Endothelial cell of umbilical vein (primary cell): ENCODE measurements at regions of chr1 and their contacts with region 1.

Region 1: DNA sequence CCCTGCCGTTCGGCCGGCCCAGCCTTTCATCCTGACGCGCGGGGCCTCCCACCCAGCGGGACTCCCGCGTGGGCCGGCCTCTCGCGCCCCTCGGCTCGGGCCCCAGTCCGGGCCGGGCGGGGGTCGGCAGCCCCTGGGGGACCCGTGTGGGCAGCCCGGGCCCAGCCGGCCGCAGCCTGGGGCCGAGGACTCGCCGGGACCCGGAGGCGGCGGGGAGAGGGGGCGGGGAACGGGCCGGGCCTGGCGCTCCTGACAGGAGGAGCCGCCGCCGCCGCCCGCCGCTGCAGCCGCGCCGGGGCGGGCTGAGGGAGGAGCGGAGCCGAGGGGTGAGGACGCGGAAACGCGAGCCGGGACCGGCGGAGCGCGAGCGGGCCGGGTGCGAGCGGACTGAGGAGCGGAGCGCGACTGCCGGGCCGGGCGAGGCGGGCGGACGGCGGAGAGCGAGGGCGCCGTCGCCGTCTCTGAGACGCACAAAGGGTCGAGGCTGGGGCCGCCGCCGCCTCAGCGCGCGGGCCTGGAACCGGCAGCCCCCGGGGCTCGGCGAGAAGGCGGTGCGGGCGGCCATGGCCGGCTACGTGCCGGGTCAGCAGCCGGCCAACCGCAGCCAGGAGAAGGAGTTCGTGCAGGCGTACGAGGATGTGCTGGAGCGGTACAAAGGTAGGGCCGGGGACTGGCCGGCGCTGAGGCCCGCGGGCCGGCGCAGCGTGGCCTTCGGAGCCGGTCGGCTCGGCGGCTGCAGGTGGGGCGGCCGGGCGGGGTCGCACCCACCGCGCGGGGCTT is 79.1 kb downstream of the NDUFS5 start:
- DNase-seq: peak; percentile 60
- H3K4me3 ChIP-seq: peak overlapping the region; percentile 70 to 79 (median 77)
- H3K27ac ChIP-seq: peak overlapping the region; percentile 82
- H3K4me1 ChIP-seq: peaks cover 53% of the 10 kb centered on the region
- H3K27me3 ChIP-seq: no peaks in the 10 kb centered on the region
- CTCF ChIP-seq: no peak
- POLR2A ChIP-seq: no peak

Region 2: DNA sequence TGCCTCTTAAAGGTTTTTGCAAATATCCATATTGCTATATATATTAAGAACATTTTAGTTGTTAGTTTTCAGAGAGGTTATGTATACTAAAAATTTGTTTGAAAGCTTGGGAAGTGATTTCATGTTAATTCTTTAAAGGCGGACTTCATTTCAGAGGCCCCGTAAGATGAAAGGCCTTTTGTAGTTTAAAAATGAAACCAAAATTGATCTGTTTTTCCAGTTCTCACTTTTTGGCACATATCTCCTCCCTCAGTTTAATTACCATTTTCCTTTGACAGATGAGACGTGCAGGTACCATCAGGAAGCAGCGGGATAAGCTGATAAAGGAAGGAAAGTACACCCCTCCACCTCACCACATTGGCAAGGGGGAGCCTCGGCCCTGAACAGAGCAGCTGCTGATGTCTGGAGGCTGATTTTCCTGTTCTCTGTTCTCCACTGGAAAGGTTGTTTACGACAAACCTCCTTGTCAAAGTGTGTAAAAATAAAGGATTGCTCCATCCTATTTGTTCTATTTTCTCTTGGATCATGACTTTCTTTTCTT is 71.1 kb before region 1 on chr1:
- CTCF ChIA-PET with region 1: no interaction called
- POLR2A ChIA-PET with region 1: no interaction called
- dilution Hi-C with region 1: no loop called
- intact Hi-C with region 1: no loop called
- DNase-seq: no peak
- H3K4me3 ChIP-seq: no peak overlapping the region
- H3K27ac ChIP-seq: no peak overlapping the region
- H3K4me1 ChIP-seq: no peaks in the 10 kb centered on the region
- H3K27me3 ChIP-seq: no peaks in the 10 kb centered on the region
- CTCF ChIP-seq: no peak
- POLR2A ChIP-seq: no peak

Region 3: DNA sequence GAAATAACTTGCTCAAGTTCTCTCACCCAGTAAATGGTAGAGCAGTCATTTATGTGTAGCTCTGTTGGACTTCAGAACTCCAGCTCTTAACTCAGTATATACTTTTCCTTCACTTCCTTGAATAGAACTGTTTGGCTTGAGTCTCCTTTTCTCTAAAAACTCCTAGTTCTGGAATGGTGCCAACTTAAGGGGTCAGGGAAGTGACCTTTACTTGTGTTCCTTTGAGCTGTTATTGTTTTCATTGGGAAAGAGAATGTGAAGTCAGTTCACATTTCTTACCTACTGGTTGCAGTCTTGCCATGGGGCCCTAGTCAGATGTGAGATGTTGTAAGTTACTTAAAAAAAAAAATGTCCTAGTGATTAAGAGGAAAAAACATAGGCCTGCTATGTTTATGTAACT is 22.3 kb after region 1 on chr1:
- CTCF ChIA-PET with region 1: interaction called, 82 read pairs
- POLR2A ChIA-PET with region 1: interaction called, 6 read pairs
- dilution Hi-C with region 1: no loop called
- intact Hi-C with region 1: loop called (anchors 1 kb)
- DNase-seq: peak; percentile 99
- H3K4me3 ChIP-seq: peak overlapping the region in 1 of 3 experiments; percentile 13
- H3K27ac ChIP-seq: peak overlapping the region; percentile 76
- H3K4me1 ChIP-seq: peaks cover 73% of the 10 kb centered on the region
- H3K27me3 ChIP-seq: no peaks in the 10 kb centered on the region
- CTCF ChIP-seq: no peak
- POLR2A ChIP-seq: peak; percentile 23

Region 4: GRCh38 chr1:39158327-39159086 is 53.3 kb after region 1 on chr1:
- CTCF ChIA-PET with region 1: no interaction called
- POLR2A ChIA-PET with region 1: no interaction called
- dilution Hi-C with region 1: no loop called
- intact Hi-C with region 1: loop called (anchors 2 kb)
- DNase-seq: no peak
- H3K4me3 ChIP-seq: no peak overlapping the region
- H3K27ac ChIP-seq: peak overlapping the region; percentile 80
- H3K4me1 ChIP-seq: peaks cover 64% of the 10 kb centered on the region
- H3K27me3 ChIP-seq: no peaks in the 10 kb centered on the region
- CTCF ChIP-seq: no peak
- POLR2A ChIP-seq: no peak

Region 5: GRCh38 chr1:39258146-39258924 is 153.1 kb after region 1 on chr1:
- CTCF ChIA-PET with region 1: interaction called, 12 read pairs
- POLR2A ChIA-PET with region 1: no interaction called
- dilution Hi-C with region 1: no loop called
- intact Hi-C with region 1: loop called (anchors 1 kb)
- DNase-seq: peak; percentile 75
- H3K4me3 ChIP-seq: no peak overlapping the region
- H3K27ac ChIP-seq: no peak overlapping the region
- H3K4me1 ChIP-seq: no peaks in the 10 kb centered on the region
- H3K27me3 ChIP-seq: no peaks in the 10 kb centered on the region
- CTCF ChIP-seq: peak; percentile 70 to 71
- POLR2A ChIP-seq: no peak

Region 6: GRCh38 chr1:39398278-39399021 is 293.2 kb after region 1 on chr1:
- CTCF ChIA-PET with region 1: no interaction called
- POLR2A ChIA-PET with region 1: no interaction called
- dilution Hi-C with region 1: no loop called
- intact Hi-C with region 1: loop called (anchors 5 kb)
- DNase-seq: peak; percentile 95
- H3K4me3 ChIP-seq: peak overlapping the region in 1 of 3 experiments; percentile 19
- H3K27ac ChIP-seq: peak overlapping the region; percentile 85
- H3K4me1 ChIP-seq: peaks cover 63% of the 10 kb centered on the region
- H3K27me3 ChIP-seq: no peaks in the 10 kb centered on the region
- CTCF ChIP-seq: no peak
- POLR2A ChIP-seq: peak; percentile 64